HCT116 (cell line): ENCODE measurements at regions of chr1 and their contacts with region 1.

Region 1: GRCh38 chr1:68120136-68120791 is 69.8 kb upstream of the DIRAS3 start:
- DNase-seq: peak; percentile 69
- ATAC-seq: peak; percentile 80
- H3K4me3 ChIP-seq: no peak overlapping the region
- H3K27ac ChIP-seq: no peak overlapping the region
- H3K4me1 ChIP-seq: peaks cover 0 to 22% of the 10 kb centered on the region in 2 experiments; a peak in 1 of 4 replicates
- H3K27me3 ChIP-seq: no peaks in the 10 kb centered on the region
- CTCF ChIP-seq: peak; percentile 64 to 83 (median 82); a peak in 5 of 6 replicates
- POLR2A ChIP-seq: no peak
- RAD21 ChIP-seq: peak; percentile 95

Region 2: DNA sequence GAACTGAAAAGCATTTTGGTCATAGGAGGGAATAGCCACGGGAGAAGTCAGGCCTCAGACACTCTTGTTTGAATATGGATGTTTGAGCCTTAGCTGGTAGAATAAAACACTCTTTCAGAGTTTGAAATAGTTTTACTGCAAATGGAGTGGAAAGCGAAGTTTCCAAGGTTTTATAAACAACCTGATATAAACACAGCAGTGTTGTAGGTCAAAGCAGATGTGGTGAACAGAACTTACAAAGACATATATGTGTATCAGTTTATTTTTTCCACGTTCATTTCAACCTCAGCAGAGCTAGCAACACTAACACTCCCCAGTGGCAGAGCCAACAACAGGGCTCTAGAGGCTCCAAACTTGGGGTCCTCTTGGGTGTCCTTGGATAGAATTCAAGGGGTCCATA is 22.2 kb after region 1 on chr1:
- CTCF ChIA-PET with region 1: no interaction called
- POLR2A ChIA-PET with region 1: no interaction called
- RAD21 ChIA-PET with region 1: interaction called in 1 of 2 experiments, 10 read pairs
- intact Hi-C with region 1: no loop called
- DNase-seq: no peak
- ATAC-seq: no peak
- H3K4me3 ChIP-seq: no peak overlapping the region
- H3K27ac ChIP-seq: no peak overlapping the region
- H3K4me1 ChIP-seq: peaks cover 3 to 9% of the 10 kb centered on the region in 2 experiments; a peak in 2 of 4 replicates
- H3K27me3 ChIP-seq: no peaks in the 10 kb centered on the region
- CTCF ChIP-seq: no peak
- POLR2A ChIP-seq: no peak
- RAD21 ChIP-seq: no peak

Region 3: GRCh38 chr1:68166348-68166747 is 46.1 kb after region 1 on chr1:
- CTCF ChIA-PET with region 1: no interaction called
- POLR2A ChIA-PET with region 1: no interaction called
- RAD21 ChIA-PET with region 1: no interaction called
- intact Hi-C with region 1: no loop called
- DNase-seq: no peak
- ATAC-seq: no peak
- H3K4me3 ChIP-seq: no peak overlapping the region
- H3K27ac ChIP-seq: no peak overlapping the region
- H3K4me1 ChIP-seq: no peaks in the 10 kb centered on the region
- H3K27me3 ChIP-seq: no peaks in the 10 kb centered on the region
- CTCF ChIP-seq: no peak
- POLR2A ChIP-seq: no peak
- RAD21 ChIP-seq: no peak

Region 4: GRCh38 chr1:68180441-68181164 is 60.3 kb after region 1 on chr1:
- CTCF ChIA-PET with region 1: no interaction called
- POLR2A ChIA-PET with region 1: no interaction called
- RAD21 ChIA-PET with region 1: no interaction called
- intact Hi-C with region 1: no loop called
- DNase-seq: no peak
- ATAC-seq: no peak
- H3K4me3 ChIP-seq: no peak overlapping the region
- H3K27ac ChIP-seq: no peak overlapping the region
- H3K4me1 ChIP-seq: peaks cover 26 to 36% of the 10 kb centered on the region in 2 experiments
- H3K27me3 ChIP-seq: no peaks in the 10 kb centered on the region
- CTCF ChIP-seq: no peak
- POLR2A ChIP-seq: no peak
- RAD21 ChIP-seq: no peak

Region 5: GRCh38 chr1:68340951-68341350 is 220.7 kb after region 1 on chr1:
- CTCF ChIA-PET with region 1: interaction called, 144 read pairs
- POLR2A ChIA-PET with region 1: interaction called, 4 read pairs
- RAD21 ChIA-PET with region 1: interaction called, 12 to 20 read pairs
- intact Hi-C with region 1: loop called (anchors 1 kb)
- DNase-seq: no peak
- ATAC-seq: no peak
- H3K4me3 ChIP-seq: no peak overlapping the region
- H3K27ac ChIP-seq: no peak overlapping the region
- H3K4me1 ChIP-seq: peaks cover 0 to 29% of the 10 kb centered on the region in 2 experiments; a peak in 3 of 4 replicates
- H3K27me3 ChIP-seq: no peaks in the 10 kb centered on the region
- CTCF ChIP-seq: no peak
- POLR2A ChIP-seq: no peak
- RAD21 ChIP-seq: no peak

Region 6: GRCh38 chr1:68378296-68379084 is 258.2 kb after region 1 on chr1:
- CTCF ChIA-PET with region 1: interaction called, 13 read pairs
- POLR2A ChIA-PET with region 1: interaction called, 3 read pairs
- RAD21 ChIA-PET with region 1: no interaction called
- intact Hi-C with region 1: no loop called
- DNase-seq: peak; percentile 77
- ATAC-seq: peak; percentile 83
- H3K4me3 ChIP-seq: peak overlapping the region in 1 of 2 experiments; percentile 8; a peak in 2 of 4 replicates
- H3K27ac ChIP-seq: peak overlapping the region; percentile 89
- H3K4me1 ChIP-seq: peaks cover 70 to 81% of the 10 kb centered on the region in 2 experiments
- H3K27me3 ChIP-seq: no peaks in the 10 kb centered on the region
- CTCF ChIP-seq: no peak
- POLR2A ChIP-seq: no peak
- RAD21 ChIP-seq: peak; percentile 17; the same call in 1 of the 2 replicates

Region 7: GRCh38 chr1:68442822-68443556 is 322.7 kb after region 1 on chr1:
- CTCF ChIA-PET with region 1: interaction called, 15 read pairs
- POLR2A ChIA-PET with region 1: interaction called, 5 read pairs
- RAD21 ChIA-PET with region 1: interaction called in 1 of 2 experiments, 4 read pairs
- intact Hi-C with region 1: loop called (anchors 2 kb)
- DNase-seq: peak; percentile 43
- ATAC-seq: peak; percentile 88
- H3K4me3 ChIP-seq: no peak overlapping the region
- H3K27ac ChIP-seq: no peak overlapping the region
- H3K4me1 ChIP-seq: peaks cover 2 to 12% of the 10 kb centered on the region in 2 experiments; a peak in 2 of 4 replicates
- H3K27me3 ChIP-seq: no peaks in the 10 kb centered on the region
- CTCF ChIP-seq: peak; percentile 47 to 80 (median 77); a peak in 5 of 6 replicates
- POLR2A ChIP-seq: no peak
- RAD21 ChIP-seq: peak; percentile 70